H1 (cell line): ENCODE measurements at regions of chr3 and their contacts with region 1.

Region 1: GRCh38 chr3:124786441-124787241 is 56.4 kb downstream of the UMPS start:
- DNase-seq: no peak
- H3K4me3 ChIP-seq: no peak overlapping the region
- H3K27ac ChIP-seq: 0 out of 2 replicates have a peak overlapping the region, but pooled peaks have one; percentile 4
- H3K4me1 ChIP-seq: peaks cover 0 to 1% (median 0%) of the 10 kb centered on the region in 4 experiments; a peak in 1 of 7 replicates
- H3K27me3 ChIP-seq: no peaks in the 10 kb centered on the region
- CTCF ChIP-seq: no peak; a peak in 1 of 4 replicates
- EP300 ChIP-seq: no peak
- POLR2A ChIP-seq: no peak
- RAD21 ChIP-seq: peak; percentile 26 to 29; a peak in 3 of 4 replicates

Region 2: DNA sequence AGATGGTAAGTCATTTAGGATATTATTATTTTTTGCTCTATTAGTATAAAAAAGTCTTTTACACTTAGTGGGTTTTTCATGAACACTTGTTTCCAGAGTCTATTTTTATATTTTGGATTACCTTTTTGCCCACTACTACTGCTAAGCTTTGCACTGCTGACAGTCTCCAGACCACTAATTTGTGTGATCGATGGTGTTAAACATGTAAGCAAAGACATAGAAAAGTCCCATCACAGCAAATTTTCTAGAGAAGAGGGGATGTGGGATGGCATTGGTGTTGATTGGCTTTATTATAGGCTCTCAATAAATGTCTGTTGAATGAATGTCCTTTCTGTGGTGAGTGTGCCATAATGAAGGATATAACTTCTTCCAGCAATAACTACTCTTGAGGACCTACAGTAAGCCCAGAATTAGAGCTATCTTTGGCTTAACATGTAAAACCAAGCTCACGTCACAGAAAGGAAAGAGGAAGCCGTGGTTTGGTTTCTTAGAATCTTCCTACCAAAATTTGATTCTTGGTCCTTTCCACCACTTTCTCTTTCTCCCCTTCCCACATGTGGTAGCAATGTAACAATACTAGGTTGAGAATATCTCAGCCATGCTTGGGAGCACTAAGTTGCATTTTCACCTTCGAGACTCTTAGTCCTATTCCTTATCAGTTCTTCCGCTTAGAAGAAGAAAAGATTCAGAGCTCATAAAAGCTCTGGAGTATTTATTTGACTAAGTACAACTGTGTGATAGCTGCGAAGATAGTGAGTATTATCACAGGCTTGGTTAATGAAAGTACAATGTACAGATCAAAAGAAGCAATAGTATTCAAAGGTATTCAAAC is 147.0 kb before region 1 on chr3:
- CTCF ChIA-PET with region 1: no interaction called
- POLR2A ChIA-PET with region 1: no interaction called
- DNase-seq: no peak
- H3K4me3 ChIP-seq: no peak overlapping the region
- H3K27ac ChIP-seq: no peak overlapping the region
- H3K4me1 ChIP-seq: peaks cover 4 to 17% (median 10%) of the 10 kb centered on the region in 4 experiments; a peak in 6 of 7 replicates
- H3K27me3 ChIP-seq: no peaks in the 10 kb centered on the region
- CTCF ChIP-seq: no peak
- EP300 ChIP-seq: no peak
- POLR2A ChIP-seq: no peak
- RAD21 ChIP-seq: no peak

Region 3: GRCh38 chr3:124812291-124813265 is 25.9 kb after region 1 on chr3:
- CTCF ChIA-PET with region 1: interaction called, 17 read pairs
- POLR2A ChIA-PET with region 1: interaction called, 5 read pairs
- DNase-seq: no peak
- H3K4me3 ChIP-seq: no peak overlapping the region
- H3K27ac ChIP-seq: no peak overlapping the region
- H3K4me1 ChIP-seq: no peaks in the 10 kb centered on the region; a peak in 1 of 7 replicates
- H3K27me3 ChIP-seq: no peaks in the 10 kb centered on the region
- CTCF ChIP-seq: no peak
- EP300 ChIP-seq: no peak
- POLR2A ChIP-seq: no peak
- RAD21 ChIP-seq: no peak

Region 4: DNA sequence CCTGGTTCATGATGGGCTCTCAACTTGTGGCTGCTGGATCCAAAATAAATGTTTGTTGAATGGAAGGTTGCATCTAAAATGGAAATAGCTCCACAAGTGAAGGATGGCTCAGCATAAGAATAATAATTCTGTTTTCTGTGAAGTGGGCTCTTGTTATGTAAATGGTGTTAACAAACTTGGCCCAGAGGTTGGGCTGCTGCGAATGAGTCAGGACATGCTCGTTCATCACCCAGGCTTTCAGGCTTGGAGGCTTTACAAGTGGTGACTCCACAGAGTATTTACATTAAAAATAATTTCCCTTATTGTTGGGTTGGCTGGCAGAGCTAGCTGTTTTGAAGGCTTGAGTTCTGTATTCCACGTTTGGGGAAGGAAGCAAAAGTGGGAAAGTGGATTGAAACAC is 40.1 kb after region 1 on chr3:
- CTCF ChIA-PET with region 1: interaction called, 12 read pairs
- POLR2A ChIA-PET with region 1: interaction called, 4 read pairs
- DNase-seq: peak in 1 of 2 experiments; percentile 41
- H3K4me3 ChIP-seq: peak overlapping the region in 1 of 4 experiments; percentile 23; a peak in 1 of 8 replicates
- H3K27ac ChIP-seq: peak overlapping the region; percentile 44; the same call in 1 of the 2 replicates
- H3K4me1 ChIP-seq: peaks cover 7 to 27% (median 21%) of the 10 kb centered on the region in 4 experiments
- H3K27me3 ChIP-seq: no peaks in the 10 kb centered on the region
- CTCF ChIP-seq: no peak
- EP300 ChIP-seq: no peak
- POLR2A ChIP-seq: 0 out of 3 replicates have a peak, but pooled peaks of 1 of the 2 experiments have one; percentile 45
- RAD21 ChIP-seq: no peak

Region 5: DNA sequence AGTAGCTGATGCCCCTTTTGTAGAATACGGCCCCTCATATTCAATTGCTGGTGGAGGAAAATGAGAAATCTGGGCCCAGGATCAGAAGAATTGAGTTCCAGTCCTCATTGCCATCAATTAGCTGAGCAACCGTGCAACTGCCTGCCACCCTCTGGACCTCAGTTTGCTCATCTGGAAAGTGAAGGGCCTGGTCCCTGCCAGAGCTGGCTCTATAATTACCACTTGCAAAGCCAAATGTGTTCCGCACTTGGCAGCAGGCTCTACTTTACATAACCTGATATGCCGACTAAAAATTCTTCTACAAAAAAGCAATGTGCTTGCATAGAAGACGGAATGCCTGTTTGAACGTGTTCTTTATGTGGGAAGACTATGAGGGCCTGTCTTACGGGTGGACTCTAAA is 109.1 kb after region 1 on chr3:
- CTCF ChIA-PET with region 1: interaction called, 30 read pairs
- POLR2A ChIA-PET with region 1: no interaction called
- DNase-seq: no peak
- H3K4me3 ChIP-seq: no peak overlapping the region
- H3K27ac ChIP-seq: no peak overlapping the region
- H3K4me1 ChIP-seq: no peaks in the 10 kb centered on the region
- H3K27me3 ChIP-seq: no peaks in the 10 kb centered on the region
- CTCF ChIP-seq: no peak
- EP300 ChIP-seq: no peak
- POLR2A ChIP-seq: no peak
- RAD21 ChIP-seq: no peak

Region 6: GRCh38 chr3:125075738-125076137 is 289.1 kb after region 1 on chr3:
- CTCF ChIA-PET with region 1: no interaction called
- POLR2A ChIA-PET with region 1: no interaction called
- DNase-seq: peak in 1 of 2 experiments; percentile 48
- H3K4me3 ChIP-seq: no peak overlapping the region
- H3K27ac ChIP-seq: no peak overlapping the region
- H3K4me1 ChIP-seq: peaks cover 0 to 6% (median 3%) of the 10 kb centered on the region in 4 experiments; a peak in 5 of 7 replicates
- H3K27me3 ChIP-seq: no peaks in the 10 kb centered on the region
- CTCF ChIP-seq: peak in 2 of 3 experiments; percentile 17 to 27; a peak in 2 of 4 replicates
- EP300 ChIP-seq: no peak
- POLR2A ChIP-seq: no peak
- RAD21 ChIP-seq: peak; percentile 12 to 33; a peak in 2 of 4 replicates